A549 (cell line): ENCODE measurements at regions of chr2 and their contacts with region 1.

Region 1: GRCh38 chr2:237744613-237745249 is 53.8 kb upstream of the RBM44 start:
- DNase-seq: peak; percentile 67 to 76
- ATAC-seq: peak; percentile 85 to 92
- H3K4me3 ChIP-seq: no peak overlapping the region
- H3K27ac ChIP-seq: no peak overlapping the region
- H3K4me1 ChIP-seq: peaks cover 23% of the 10 kb centered on the region
- CTCF ChIP-seq: peak; percentile 96
- EP300 ChIP-seq: no peak
- POLR2A ChIP-seq: no peak
- RAD21 ChIP-seq: peak; percentile 97 to 98

Region 2: GRCh38 chr2:237581751-237582746 is 162.7 kb before region 1 on chr2:
- CTCF ChIA-PET with region 1: interaction called, 10 read pairs
- POLR2A ChIA-PET with region 1: no interaction called
- DNase-seq: peak in 1 of 2 experiments; percentile 58
- ATAC-seq: peak; percentile 70
- H3K4me3 ChIP-seq: no peak overlapping the region
- H3K27ac ChIP-seq: peak overlapping the region in 1 of 2 experiments; percentile 36; a peak in 3 of 6 replicates
- H3K4me1 ChIP-seq: 0 out of 3 replicates have a peak, but pooled peaks cover 2% of the 10 kb centered on the region
- CTCF ChIP-seq: peak; percentile 41; the same call in 2 of the 3 replicates
- EP300 ChIP-seq: no peak
- POLR2A ChIP-seq: no peak
- RAD21 ChIP-seq: peak; percentile 59 to 61

Region 3: DNA sequence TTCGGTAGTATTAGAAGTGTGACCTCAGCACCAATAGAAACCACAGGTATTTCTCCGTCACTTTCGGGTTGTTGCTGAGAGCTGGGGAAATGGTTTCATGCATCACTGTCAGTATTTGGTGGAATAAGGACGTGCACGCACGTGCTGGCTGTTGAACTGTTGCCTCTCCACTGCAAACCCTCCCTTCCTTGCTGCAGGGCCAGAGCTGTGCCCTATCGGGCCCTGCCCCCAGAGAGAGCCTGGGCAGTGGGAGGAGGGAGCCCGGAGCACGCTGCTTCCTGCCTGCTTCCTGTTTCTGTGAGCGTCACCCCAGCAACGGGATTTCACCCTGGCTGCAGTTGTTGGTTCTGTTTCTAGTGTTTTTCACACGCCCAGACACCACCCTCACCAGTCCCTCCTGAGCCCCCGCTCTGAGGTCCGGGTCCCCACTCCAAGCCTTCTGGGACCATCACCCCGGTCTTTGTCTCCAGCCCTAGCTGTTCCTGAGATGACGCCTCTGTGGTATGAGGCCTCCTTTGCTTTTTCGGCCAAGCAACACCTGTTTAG is 69.9 kb before region 1 on chr2:
- CTCF ChIA-PET with region 1: interaction called, 295 read pairs
- POLR2A ChIA-PET with region 1: no interaction called
- DNase-seq: no peak
- ATAC-seq: 0 out of 6 replicates have a peak, but pooled peaks of 1 of the 2 experiments have one; percentile 14
- H3K4me3 ChIP-seq: no peak overlapping the region
- H3K27ac ChIP-seq: no peak overlapping the region
- H3K4me1 ChIP-seq: peaks cover under 1% of the 10 kb centered on the region; the same call in 2 of the 3 replicates
- CTCF ChIP-seq: no peak
- EP300 ChIP-seq: no peak
- POLR2A ChIP-seq: no peak
- RAD21 ChIP-seq: no peak

Region 4: DNA sequence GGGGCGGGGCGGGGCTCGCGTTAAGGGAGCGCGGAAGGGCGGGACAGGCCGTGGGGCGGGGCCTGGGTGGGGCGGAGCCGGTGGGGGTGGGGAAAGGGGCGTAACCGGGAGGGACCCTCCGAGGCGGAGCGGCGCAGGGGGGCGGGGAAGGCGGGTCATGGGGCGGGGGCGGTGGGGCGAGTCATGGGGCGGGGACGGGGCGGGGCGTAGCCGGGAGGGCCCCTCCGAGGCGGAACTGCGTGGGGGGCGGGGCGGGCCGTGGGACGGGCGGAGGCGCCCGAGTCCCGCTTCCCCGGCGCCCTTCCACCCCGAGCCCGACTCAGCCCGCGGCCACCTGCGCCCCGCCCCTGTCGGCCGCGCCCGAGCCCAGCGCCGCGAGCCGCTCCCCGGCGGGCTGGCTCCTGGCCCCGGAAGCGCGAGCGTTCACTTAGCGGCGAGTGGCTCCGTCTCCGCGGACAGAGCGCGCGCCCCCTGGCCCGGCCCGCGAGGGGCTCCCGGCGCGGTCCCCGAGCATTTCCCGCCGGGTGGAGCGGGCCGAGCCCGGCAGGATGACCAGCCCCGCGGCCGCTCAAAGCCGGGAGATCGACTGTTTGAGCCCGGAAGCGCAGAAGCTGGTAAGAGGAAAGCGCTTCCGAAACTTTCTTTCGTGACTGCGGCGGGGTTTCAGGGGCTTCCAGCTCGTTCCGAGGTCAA is 52.7 kb before region 1 on chr2:
- CTCF ChIA-PET with region 1: interaction called, 60 read pairs
- POLR2A ChIA-PET with region 1: no interaction called
- DNase-seq: peak; percentile 68 to 93
- ATAC-seq: peak; percentile 69 to 74
- H3K4me3 ChIP-seq: peak overlapping the region; percentile 88
- H3K27ac ChIP-seq: peak overlapping the region; percentile 96 to 98
- H3K4me1 ChIP-seq: peaks cover 62% of the 10 kb centered on the region
- CTCF ChIP-seq: no peak
- EP300 ChIP-seq: no peak
- POLR2A ChIP-seq: peak; percentile 41
- RAD21 ChIP-seq: no peak

Region 5: DNA sequence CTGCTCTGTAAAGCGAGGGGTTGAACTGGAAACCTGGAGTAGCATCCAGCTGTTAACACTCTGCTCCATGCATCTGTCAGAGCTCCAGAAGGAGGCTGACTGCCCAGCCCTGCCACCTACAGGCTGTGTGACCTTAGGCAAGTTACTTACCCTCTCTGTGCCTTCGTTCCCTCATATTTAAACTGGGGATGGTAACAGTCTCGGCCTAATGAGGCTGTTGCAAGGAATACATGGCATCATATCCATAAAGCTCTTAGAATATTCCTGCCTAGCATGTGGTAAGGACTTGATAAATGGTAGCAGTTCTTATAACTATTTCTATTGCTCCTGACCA is 36.7 kb before region 1 on chr2:
- CTCF ChIA-PET with region 1: interaction called, 25 read pairs
- POLR2A ChIA-PET with region 1: no interaction called
- DNase-seq: no peak
- ATAC-seq: peak in 1 of 2 experiments; percentile 17; a peak in 1 of 6 replicates
- H3K4me3 ChIP-seq: no peak overlapping the region
- H3K27ac ChIP-seq: no peak overlapping the region
- H3K4me1 ChIP-seq: peaks cover 19% of the 10 kb centered on the region
- CTCF ChIP-seq: no peak
- EP300 ChIP-seq: no peak
- POLR2A ChIP-seq: no peak
- RAD21 ChIP-seq: no peak

Region 6: DNA sequence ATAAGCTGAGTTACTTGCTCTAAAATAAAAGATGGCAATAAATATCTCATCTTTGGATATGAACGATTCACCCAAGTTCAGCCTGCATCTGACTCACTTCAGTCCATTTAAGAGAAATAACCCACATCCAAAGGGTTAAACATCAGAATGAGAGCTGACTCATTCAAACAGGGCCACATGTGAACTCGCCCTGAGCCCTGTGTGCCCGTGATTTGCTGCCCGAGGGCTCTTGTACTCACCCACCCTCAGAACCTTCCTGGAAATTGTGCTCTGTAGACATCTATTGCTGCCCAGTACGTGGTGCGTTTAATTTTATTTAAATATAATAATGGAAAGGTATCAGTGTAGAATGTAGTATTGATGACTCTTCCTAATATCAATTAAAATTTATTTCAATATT is 13.1 kb before region 1 on chr2:
- CTCF ChIA-PET with region 1: interaction called, 126 read pairs
- POLR2A ChIA-PET with region 1: no interaction called
- DNase-seq: peak; percentile 74 to 79
- ATAC-seq: peak; percentile 82 to 88
- H3K4me3 ChIP-seq: no peak overlapping the region
- H3K27ac ChIP-seq: peak overlapping the region; percentile 51 to 84
- H3K4me1 ChIP-seq: peaks cover 70% of the 10 kb centered on the region
- CTCF ChIP-seq: no peak
- EP300 ChIP-seq: no peak
- POLR2A ChIP-seq: no peak
- RAD21 ChIP-seq: no peak

Region 7: GRCh38 chr2:237774802-237775553 is 30.2 kb after region 1 on chr2:
- CTCF ChIA-PET with region 1: interaction called, 25 read pairs
- POLR2A ChIA-PET with region 1: no interaction called
- DNase-seq: peak; percentile 58 to 71
- ATAC-seq: peak; percentile 97 to 98
- H3K4me3 ChIP-seq: no peak overlapping the region
- H3K27ac ChIP-seq: no peak overlapping the region
- H3K4me1 ChIP-seq: peaks cover 3% of the 10 kb centered on the region; the same call in 1 of the 3 replicates
- CTCF ChIP-seq: peak; percentile 56
- EP300 ChIP-seq: no peak
- POLR2A ChIP-seq: no peak
- RAD21 ChIP-seq: peak; percentile 44 to 57